Dendritic cell treated with granulocyte-macrophage colony-stimulating factor and Interleukin-4, amounts not matched to agents 40 ng/mL and 50 ng/mL, for 4 days (primary cell): ENCODE measurements at regions of chr12 and their contacts with region 1.

Region 1: GRCh38 chr12:93098077-93098476 is 169.0 kb upstream of the EEA1 start:
- H3K4me3 Mint-ChIP-seq: no peak overlapping the region
- H3K27ac Mint-ChIP-seq: peak overlapping the region; percentile 57
- H3K4me1 Mint-ChIP-seq: peaks cover 7% of the 10 kb centered on the region
- H3K27me3 Mint-ChIP-seq: no peaks in the 10 kb centered on the region

Region 2: GRCh38 chr12:93229494-93230325 is 131.6 kb after region 1 on chr12:
- intact Hi-C with region 1: no loop called
- H3K4me3 Mint-ChIP-seq: no peak overlapping the region
- H3K27ac Mint-ChIP-seq: no peak overlapping the region
- H3K4me1 Mint-ChIP-seq: peaks cover 8% of the 10 kb centered on the region
- H3K27me3 Mint-ChIP-seq: no peaks in the 10 kb centered on the region

Region 3: DNA sequence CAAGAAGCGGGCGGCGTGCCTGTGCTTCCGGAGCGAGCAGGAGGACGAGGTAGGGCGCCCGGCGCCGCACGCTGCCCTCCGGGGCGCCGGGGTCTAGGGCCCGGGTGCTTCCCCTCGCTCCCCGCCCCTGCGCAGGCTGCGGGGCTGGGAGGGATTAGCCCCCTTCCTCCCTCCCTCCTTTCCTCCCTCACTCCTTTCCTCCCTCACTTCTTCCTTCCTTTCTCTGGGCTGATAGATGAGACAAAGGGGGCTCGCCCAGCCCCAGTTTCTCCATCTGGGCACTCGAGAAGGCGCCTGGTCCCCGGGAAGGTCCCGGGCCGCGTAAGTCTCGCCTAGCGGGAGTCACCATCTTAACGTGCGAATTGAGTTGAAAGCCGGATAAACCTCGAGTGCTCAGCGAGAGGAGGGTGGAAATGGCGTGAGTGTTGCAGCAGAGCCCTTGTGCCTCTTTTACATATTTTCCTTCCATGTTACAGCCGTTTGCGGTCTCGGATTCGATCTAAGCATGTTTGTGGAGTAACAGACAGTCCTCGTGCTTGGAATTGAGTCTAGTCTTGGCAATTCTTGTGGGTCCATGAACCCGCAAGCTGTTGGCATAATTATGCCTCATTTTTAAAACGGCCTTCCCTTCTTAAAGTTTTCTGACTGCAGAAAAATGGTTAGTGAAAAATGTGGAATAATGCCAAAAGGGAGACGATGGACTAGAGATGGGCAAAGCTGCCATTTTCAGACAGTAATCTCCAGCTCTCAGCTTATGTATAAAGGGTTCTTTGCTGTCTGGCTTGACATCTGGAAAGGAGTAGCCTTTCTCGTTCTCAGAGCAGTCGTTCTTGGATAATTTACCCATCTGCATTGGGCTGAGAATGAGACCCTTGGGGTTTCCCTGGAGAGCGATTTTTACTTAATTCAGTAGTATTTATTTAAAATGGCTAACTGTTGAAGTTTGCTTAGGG is 280.6 kb after region 1 on chr12:
- intact Hi-C with region 1: loop called (anchors 5 kb)
- H3K4me3 Mint-ChIP-seq: peak overlapping the region; percentile 99
- H3K27ac Mint-ChIP-seq: peak overlapping the region; percentile 95
- H3K4me1 Mint-ChIP-seq: peaks cover 62% of the 10 kb centered on the region
- H3K27me3 Mint-ChIP-seq: no peaks in the 10 kb centered on the region

Region 4: DNA sequence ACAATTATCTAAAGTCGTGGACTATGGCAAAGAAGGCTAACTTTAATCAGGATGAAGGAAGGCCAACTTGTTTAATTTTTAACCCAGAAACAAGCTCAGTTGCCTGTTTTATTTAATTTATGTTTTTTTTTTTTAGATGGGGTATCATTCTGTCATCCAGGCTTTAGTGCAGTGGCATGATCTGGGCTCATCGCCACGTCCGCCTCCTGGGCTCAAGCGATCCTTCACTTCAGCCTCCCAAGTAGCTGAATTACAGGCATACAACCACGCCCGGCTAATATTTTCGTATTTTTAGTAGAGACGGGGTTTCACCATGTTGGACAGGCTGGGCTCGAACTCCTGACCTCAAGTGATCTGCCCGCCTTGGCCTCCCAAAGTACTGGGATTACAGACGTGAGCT is 299.3 kb after region 1 on chr12:
- intact Hi-C with region 1: loop called (anchors 2 kb)
- H3K4me3 Mint-ChIP-seq: no peak overlapping the region
- H3K27ac Mint-ChIP-seq: no peak overlapping the region
- H3K4me1 Mint-ChIP-seq: no peaks in the 10 kb centered on the region
- H3K27me3 Mint-ChIP-seq: no peaks in the 10 kb centered on the region

Region 5: GRCh38 chr12:94353130-94353529 is 1255.1 kb after region 1 on chr12:
- intact Hi-C with region 1: no loop called
- H3K4me3 Mint-ChIP-seq: no peak overlapping the region
- H3K27ac Mint-ChIP-seq: no peak overlapping the region
- H3K4me1 Mint-ChIP-seq: no peaks in the 10 kb centered on the region
- H3K27me3 Mint-ChIP-seq: no peaks in the 10 kb centered on the region